ENCODE measurements at regions of chr9 and their contacts with region 1.

Region 1: DNA sequence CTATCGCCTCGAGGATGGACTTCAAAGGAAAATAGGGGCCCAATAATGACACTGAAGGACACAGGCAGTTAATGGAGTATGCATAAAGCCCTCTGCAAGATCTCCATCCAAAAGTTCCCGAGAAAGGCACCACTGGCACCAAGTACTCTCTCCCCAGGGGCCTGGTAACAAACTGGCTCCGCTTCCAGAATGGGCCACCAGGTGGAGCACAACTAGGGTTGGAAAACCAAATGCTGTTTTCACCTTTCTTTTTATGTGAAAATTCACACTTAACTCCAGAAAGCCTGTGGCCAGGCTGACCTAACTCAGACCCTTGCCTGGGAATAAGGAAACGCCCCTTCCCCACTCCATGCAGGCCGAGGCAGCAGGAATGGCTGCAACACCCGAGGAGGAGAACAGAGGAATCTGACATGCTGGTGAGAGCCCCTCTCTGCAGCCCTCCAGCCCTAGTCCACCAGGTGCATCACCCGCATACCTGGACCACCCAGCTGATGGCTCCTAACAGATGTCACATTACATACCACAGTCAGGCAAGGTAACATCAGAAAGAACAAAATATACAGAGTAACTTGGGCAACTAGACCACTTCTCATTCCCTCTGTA is 42.8 kb downstream of the CAMSAP1 start:
- DNase-seq: no peak
- ATAC-seq: peak; percentile 31

Region 2: GRCh38 chr9:135701959-135702721 is 162.4 kb before region 1 on chr9 and contains the start of gene KCNT1:
- intact Hi-C with region 1: no loop called
- DNase-seq: no peak
- ATAC-seq: peak; percentile 55
- total RNA-seq, gene KCNT1: 2.6 TPM

Region 3: GRCh38 chr9:135907431-135908092 is 43.0 kb after region 1 on chr9 and contains the start of gene CAMSAP1:
- intact Hi-C with region 1: loop called (anchors 5 kb)
- DNase-seq: peak; percentile 96
- ATAC-seq: peak; percentile 98
- total RNA-seq, gene CAMSAP1: 17.6 TPM

Region 4: GRCh38 chr9:135939351-135940265 is 75.1 kb after region 1 on chr9:
- intact Hi-C with region 1: loop called (anchors 10 kb)
- DNase-seq: no peak
- ATAC-seq: no peak

Measured in Right ventricle myocardium inferior (tissue), 1 donor.